Colonic mucosa (tissue), 4 donors: ENCODE measurements at regions of chr17 and their contacts with region 1.

Region 1: GRCh38 chr17:72539981-72540897 is 419.4 kb downstream of the SOX9 start:
- DNase-seq: peak; percentile 81
- H3K4me3 ChIP-seq: no peak overlapping the region
- H3K27ac ChIP-seq: peak overlapping the region; percentile 60
- H3K4me1 ChIP-seq: no peaks in the 10 kb centered on the region
- H3K27me3 ChIP-seq: no peaks in the 10 kb centered on the region
- CTCF ChIP-seq: peak; percentile 79

Region 2: DNA sequence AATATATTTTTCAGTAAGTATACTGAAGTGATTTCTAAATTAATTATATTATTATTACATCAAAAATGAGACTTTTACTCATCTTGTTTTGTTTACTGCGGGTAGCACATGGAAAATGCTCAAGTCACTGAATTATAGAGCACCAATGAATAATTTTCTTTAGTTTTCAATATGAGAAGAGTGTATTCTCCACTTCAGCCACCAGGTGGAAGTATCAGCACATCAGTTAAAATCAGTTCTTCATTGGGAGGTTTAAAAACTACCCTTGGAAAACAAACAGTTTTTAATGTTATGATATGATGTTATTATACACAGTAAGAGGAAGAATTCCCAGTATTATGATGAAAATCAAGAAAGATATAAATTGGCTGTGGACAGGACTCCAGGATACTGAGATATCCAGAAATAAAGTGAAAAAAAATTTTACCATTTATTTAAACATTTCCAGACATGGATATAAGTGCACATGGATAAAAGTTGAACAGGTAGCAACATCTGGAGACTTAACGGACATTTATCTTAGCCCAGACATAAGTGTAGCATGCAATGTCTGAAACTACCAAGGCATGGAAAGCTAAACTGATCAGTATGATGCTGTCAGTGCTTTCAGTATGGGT is 1903.6 kb before region 1 on chr17:
- intact Hi-C with region 1: loop called (anchors 10 kb)
- DNase-seq: no peak
- H3K4me3 ChIP-seq: no peak overlapping the region
- H3K27ac ChIP-seq: no peak overlapping the region
- H3K4me1 ChIP-seq: no peaks in the 10 kb centered on the region
- H3K27me3 ChIP-seq: no peaks in the 10 kb centered on the region
- CTCF ChIP-seq: peak; percentile 78

Region 3: GRCh38 chr17:70767102-70767701 is 1773.0 kb before region 1 on chr17:
- intact Hi-C with region 1: loop called (anchors 10 kb)
- DNase-seq: no peak
- H3K4me3 ChIP-seq: no peak overlapping the region
- H3K27ac ChIP-seq: no peak overlapping the region
- H3K4me1 ChIP-seq: no peaks in the 10 kb centered on the region
- H3K27me3 ChIP-seq: no peaks in the 10 kb centered on the region
- CTCF ChIP-seq: no peak

Region 4: GRCh38 chr17:71472809-71473789 is 1067.1 kb before region 1 on chr17:
- intact Hi-C with region 1: loop called (anchors 5 kb)
- DNase-seq: peak; percentile 30
- H3K4me3 ChIP-seq: no peak overlapping the region
- H3K27ac ChIP-seq: no peak overlapping the region
- H3K4me1 ChIP-seq: no peaks in the 10 kb centered on the region
- H3K27me3 ChIP-seq: no peaks in the 10 kb centered on the region
- CTCF ChIP-seq: peak; percentile 57

Region 5: GRCh38 chr17:72126563-72127486 is 413.4 kb before region 1 on chr17:
- intact Hi-C with region 1: loop called (anchors 5 kb)
- DNase-seq: peak; percentile 75
- H3K4me3 ChIP-seq: no peak overlapping the region
- H3K27ac ChIP-seq: peak overlapping the region; percentile 28
- H3K4me1 ChIP-seq: no peaks in the 10 kb centered on the region
- H3K27me3 ChIP-seq: peaks cover 5% of the 10 kb centered on the region
- CTCF ChIP-seq: no peak